Activated CD4-positive, alpha-beta T cell treated with anti-CD3 and anti-CD28 coated beads for 36 hours (primary cell): ENCODE measurements at regions of chr7 and their contacts with region 1.

Region 1: GRCh38 chr7:44847508-44847920 is 373 bp downstream of the H2AZ2 start:
- DNase-seq: peak; percentile 93
- ATAC-seq: peak; percentile 70
- H3K4me3 Mint-ChIP-seq: peak overlapping the region; percentile 95
- H3K27ac Mint-ChIP-seq: peak overlapping the region; percentile 97
- H3K4me1 Mint-ChIP-seq: peaks cover 38% of the 10 kb centered on the region
- H3K27me3 Mint-ChIP-seq: no peaks in the 10 kb centered on the region

Region 2: GRCh38 chr7:44123190-44124003 is 724.1 kb before region 1 on chr7 and contains the start of gene POLD2:
- CTCF ChIA-PET with region 1: no interaction called
- POLR2A ChIA-PET with region 1: no interaction called
- intact Hi-C with region 1: loop called in 1 of 2 experiments (anchors 2 kb)
- DNase-seq: peak; percentile 99
- ATAC-seq: peak; percentile 100
- H3K4me3 Mint-ChIP-seq: peak within 1 kb of the TSS; percentile 86
- H3K27ac Mint-ChIP-seq: peak within 1 kb of the TSS; percentile 89
- H3K4me1 Mint-ChIP-seq: peaks cover 42% of the 10 kb centered on the region
- H3K27me3 Mint-ChIP-seq: no peaks in the 10 kb centered on the region
- total RNA-seq, gene POLD2: 250 to 347 TPM

Region 3: DNA sequence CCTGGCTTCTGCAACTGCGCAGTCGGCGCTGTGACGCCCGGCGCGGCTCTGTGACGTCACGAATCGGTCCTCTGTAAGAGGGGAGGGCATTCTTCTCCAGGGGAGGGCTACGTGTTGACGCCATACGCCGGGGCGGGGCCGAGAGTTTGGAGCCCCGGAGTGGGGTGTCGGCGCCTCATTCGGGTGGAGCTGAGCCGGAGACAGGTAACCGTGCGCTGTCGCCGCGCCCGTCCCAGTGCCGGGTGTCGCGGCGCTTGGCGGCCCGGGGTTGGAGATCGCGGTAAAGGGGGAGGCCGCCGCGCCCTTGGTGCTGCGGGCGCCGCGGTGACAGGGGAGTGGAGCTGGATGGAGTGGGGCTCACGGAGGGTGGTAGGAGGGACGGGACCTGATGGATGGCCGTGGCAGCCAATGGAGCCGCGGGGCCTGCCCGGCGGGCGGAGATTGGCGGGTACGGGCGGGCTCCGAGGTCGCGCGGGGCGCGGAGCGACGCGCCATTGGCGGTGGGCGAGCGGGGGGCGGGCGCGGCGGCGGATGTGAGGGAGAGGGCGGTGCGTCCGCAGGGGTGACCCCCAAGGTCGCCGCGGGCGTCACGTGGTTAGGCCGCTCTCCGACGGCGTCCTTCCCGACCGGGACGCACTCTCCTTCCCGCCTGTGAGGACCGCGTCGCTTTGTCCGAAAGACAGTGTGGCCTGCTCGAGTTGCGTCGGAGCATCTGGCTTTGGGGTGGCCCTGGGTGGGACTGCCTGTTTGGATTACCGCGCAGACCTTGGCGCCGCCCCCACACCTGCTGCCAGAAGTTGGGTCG is 240.9 kb before region 1 on chr7 and contains the start of gene OGDH:
- CTCF ChIA-PET with region 1: no interaction called
- POLR2A ChIA-PET with region 1: interaction called, 10 read pairs
- intact Hi-C with region 1: loop called (anchors 1 kb)
- DNase-seq: peak; percentile 100
- ATAC-seq: peak; percentile 98
- H3K4me3 Mint-ChIP-seq: peak within 1 kb of the TSS; percentile 92
- H3K27ac Mint-ChIP-seq: peak within 1 kb of the TSS; percentile 97
- H3K4me1 Mint-ChIP-seq: peaks cover 33% of the 10 kb centered on the region
- H3K27me3 Mint-ChIP-seq: no peaks in the 10 kb centered on the region
- total RNA-seq, gene OGDH: 80.3 to 90.1 TPM

Region 4: DNA sequence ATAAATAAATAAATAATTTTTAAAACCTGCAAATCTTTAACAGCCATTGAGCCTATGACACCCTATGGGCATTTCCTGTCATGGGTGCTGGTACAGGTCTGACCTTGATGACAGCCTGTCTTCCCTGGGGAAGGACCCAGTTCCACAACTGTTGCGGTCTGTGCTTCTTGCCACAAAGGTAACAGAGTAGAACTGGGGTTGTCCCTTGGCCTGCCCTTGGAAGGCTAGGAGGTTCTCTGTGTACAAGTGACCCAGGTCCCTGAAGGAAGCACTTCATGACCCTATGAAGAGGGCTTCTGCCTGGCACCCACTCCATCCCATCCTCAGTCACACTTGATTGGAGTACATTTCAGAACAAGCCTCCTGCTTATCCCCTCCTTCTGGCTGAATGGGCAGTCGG is 174.2 kb before region 1 on chr7:
- CTCF ChIA-PET with region 1: no interaction called
- POLR2A ChIA-PET with region 1: no interaction called
- intact Hi-C with region 1: no loop called
- DNase-seq: no peak
- ATAC-seq: no peak
- H3K4me3 Mint-ChIP-seq: no peak overlapping the region
- H3K27ac Mint-ChIP-seq: no peak overlapping the region
- H3K4me1 Mint-ChIP-seq: no peaks in the 10 kb centered on the region
- H3K27me3 Mint-ChIP-seq: no peaks in the 10 kb centered on the region

Region 5: DNA sequence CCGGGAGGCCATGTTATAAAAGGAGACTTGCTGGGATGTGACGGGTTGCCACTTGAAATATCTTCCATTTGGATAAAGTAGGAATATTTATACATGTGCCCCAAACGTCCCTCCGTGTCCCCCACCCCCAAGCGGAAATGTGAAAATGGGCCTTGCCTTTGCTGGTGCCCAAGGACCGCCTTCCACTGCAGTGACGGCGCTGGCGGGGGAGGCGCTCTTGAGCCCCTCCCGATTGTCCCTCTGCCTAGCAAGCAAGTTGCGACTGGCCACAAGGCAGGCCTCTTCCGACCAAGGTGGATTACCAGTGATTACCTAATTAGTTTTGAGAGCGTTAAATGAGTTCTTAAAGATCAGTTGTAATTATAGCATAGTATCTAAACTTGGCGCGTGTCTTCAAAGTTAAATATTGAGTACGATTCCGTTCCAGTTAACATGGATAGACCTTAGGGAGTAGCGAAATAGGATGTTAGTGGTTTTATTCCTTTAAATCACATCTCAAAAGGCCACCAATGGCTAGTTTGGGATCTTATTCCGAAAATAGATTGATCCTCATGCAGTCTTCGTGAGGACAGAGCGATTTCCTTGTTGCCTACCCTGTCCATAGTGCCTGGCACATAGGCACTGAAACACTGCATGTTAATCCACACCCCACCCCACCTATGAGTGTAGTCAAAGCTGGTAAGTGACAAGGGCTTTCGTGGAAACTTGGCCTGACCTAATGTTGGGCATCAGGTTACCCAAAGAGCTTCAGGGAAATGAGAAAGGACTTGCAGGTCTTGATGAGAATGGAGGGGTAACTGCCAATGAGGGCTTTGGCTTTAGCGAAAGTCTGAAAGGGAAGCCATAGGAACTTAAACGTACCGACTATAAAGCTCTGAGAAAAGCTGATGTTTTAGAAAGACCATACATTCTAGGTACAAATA is 49.9 kb before region 1 on chr7:
- CTCF ChIA-PET with region 1: interaction called, 8 read pairs
- POLR2A ChIA-PET with region 1: interaction called, 19 read pairs
- intact Hi-C with region 1: loop called (anchors 1 kb)
- DNase-seq: peak; percentile 91
- ATAC-seq: peak; percentile 58
- H3K4me3 Mint-ChIP-seq: peak overlapping the region; percentile 100
- H3K27ac Mint-ChIP-seq: peak overlapping the region; percentile 99
- H3K4me1 Mint-ChIP-seq: peaks cover 41% of the 10 kb centered on the region
- H3K27me3 Mint-ChIP-seq: no peaks in the 10 kb centered on the region

Region 6: GRCh38 chr7:44921607-44922359 is 74.3 kb after region 1 on chr7:
- CTCF ChIA-PET with region 1: interaction called, 11 read pairs
- POLR2A ChIA-PET with region 1: interaction called, 4 read pairs
- intact Hi-C with region 1: loop called (anchors 2 kb)
- DNase-seq: peak; percentile 99
- ATAC-seq: peak; percentile 99
- H3K4me3 Mint-ChIP-seq: no peak overlapping the region
- H3K27ac Mint-ChIP-seq: peak overlapping the region; percentile 47
- H3K4me1 Mint-ChIP-seq: peaks cover 15% of the 10 kb centered on the region
- H3K27me3 Mint-ChIP-seq: peaks cover under 1% of the 10 kb centered on the region

Region 7: DNA sequence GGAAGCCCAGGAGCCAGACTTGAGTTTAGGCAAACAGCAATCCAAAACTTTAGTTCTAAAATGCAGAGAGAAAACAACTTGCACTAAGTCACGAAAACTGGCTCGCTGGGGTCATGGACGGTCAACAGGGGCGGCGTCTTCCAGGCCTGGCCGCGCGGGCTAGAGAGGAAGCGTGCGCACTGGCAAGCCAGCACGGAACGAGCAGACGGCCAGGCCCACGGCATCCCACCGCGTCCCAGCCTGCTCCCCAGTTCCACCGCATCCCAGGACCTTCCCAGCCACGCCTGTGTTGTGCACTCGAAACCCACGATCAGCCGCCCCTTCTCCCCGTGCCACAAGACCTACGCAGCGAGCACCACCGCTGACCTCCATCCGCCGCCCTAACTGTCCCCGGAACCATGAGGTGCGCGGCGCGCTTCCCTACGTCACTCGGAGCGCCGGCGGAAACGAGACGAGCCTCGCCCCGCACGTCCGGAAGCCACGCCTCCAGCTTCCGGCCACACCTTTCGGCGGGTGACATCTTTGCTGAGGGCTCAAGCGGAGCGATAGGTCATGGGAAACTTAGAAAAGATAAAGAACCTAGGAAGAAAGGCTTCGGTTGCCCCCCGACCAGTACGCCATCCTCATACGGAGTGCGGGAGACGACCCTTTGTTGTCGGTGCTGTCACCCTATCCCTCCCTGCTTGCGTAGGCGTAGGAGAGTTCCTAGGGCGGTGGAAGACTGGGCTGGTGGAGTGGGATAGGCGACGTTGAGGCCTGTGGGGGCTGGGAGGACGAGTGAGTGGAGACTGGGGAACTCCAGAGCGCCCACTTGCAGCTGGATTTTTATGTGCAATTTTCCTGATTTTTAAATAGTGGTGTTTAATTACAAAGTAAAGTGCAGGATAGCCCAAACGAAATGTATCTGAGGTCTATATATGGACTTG is 264.0 kb after region 1 on chr7 and contains the start of gene TBRG4:
- CTCF ChIA-PET with region 1: no interaction called
- POLR2A ChIA-PET with region 1: interaction called, 12 read pairs
- intact Hi-C with region 1: loop called (anchors 1 to 2 kb)
- DNase-seq: peak; percentile 97
- ATAC-seq: peak; percentile 95
- H3K4me3 Mint-ChIP-seq: peak within 1 kb of the TSS; percentile 94
- H3K27ac Mint-ChIP-seq: peak within 1 kb of the TSS; percentile 96
- H3K4me1 Mint-ChIP-seq: peaks cover 35% of the 10 kb centered on the region
- H3K27me3 Mint-ChIP-seq: peaks cover 2% of the 10 kb centered on the region
- total RNA-seq, gene TBRG4: 158 to 163 TPM